ENCODE measurements at regions of chr17 and their contacts with region 1.

Region 1: DNA sequence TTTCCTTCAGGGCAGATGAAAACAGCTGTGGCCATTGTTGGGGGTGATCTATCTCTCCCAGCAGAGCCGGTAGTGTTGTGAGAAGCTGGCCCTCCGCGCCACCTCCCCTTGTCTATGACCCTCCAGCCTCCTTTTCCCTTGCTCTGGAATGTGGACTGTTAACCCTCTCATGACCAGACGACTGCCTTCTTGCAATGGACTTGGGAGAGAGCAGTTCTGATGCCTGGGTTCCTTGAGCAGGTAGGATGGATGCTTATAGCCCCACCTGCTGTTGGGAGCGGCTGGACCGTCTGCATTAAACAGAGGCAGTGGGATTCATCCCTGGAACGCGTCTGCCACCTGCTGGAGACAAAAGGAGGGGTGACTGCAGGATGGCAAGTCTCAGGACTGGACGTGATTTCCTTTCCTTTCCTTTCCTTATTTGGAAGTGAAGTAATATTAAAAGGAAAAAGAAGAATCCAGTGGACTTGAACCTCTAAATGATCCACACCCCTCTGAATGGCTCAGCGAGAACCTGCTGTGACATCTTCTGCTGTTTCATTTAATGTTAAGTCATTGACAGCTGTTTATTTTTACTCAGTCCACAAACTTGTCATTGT is 1.8 kb upstream of the SOST start:
- DNase-seq: peak; percentile 96
- H3K4me3 ChIP-seq: no peak overlapping the region
- H3K27ac ChIP-seq: peak overlapping the region in 1 of 4 donors; percentile 44
- H3K4me1 ChIP-seq: peaks cover 0 to 10% (median 9%) of the 10 kb centered on the region in 4 donors
- H3K27me3 ChIP-seq: peaks cover 4 to 26% (median 19%) of the 10 kb centered on the region in 3 donors
- CTCF ChIP-seq: peak; percentile 96 to 99 (median 99)
- EP300 ChIP-seq: no peak
- POLR2A ChIP-seq: no peak

Region 2: DNA sequence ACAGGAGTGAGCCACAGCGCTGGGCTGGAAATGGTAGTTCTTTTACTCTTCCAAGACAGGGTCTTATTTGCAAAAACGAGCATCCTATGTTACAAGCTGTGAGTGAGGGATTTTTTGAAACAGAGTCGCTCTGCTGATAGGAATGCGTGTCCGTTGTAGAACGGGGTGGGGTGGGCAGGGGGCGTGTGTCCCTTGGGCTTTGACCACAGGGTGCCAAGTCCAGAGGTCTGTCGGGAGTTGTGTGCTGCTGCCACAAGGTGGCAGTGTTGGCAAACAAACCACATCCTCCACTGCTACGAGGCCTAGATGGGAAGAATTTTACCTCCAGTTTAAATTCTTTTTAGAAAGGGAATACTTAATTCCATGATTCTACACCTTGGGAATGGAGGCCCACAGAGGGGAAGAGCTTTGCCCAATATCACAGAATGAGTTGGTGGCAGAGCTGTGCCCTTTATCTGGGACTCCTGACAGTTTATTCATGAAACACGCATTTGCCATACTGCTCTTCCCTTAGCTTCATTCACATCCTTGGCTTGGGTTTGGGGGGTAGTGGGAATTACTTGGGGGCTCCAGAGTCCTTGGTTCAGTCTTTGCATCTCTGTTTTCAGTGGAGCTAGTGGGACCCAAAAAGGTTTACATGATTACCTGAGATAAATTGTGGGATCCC is 183.7 kb before region 1 on chr17:
- intact Hi-C with region 1: loop called (anchors 5 kb)
- DNase-seq: peak; percentile 77
- H3K4me3 ChIP-seq: no peak overlapping the region
- H3K27ac ChIP-seq: no peak overlapping the region
- H3K4me1 ChIP-seq: peaks cover 0 to 18% (median 15%) of the 10 kb centered on the region in 4 donors
- H3K27me3 ChIP-seq: no peaks in the 10 kb centered on the region
- CTCF ChIP-seq: peak; percentile 88 to 96 (median 92)
- EP300 ChIP-seq: no peak
- POLR2A ChIP-seq: no peak

Region 3: GRCh38 chr17:43694077-43694870 is 66.1 kb before region 1 on chr17:
- intact Hi-C with region 1: loop called (anchors 1 kb)
- DNase-seq: peak; percentile 88
- H3K4me3 ChIP-seq: no peak overlapping the region
- H3K27ac ChIP-seq: no peak overlapping the region
- H3K4me1 ChIP-seq: peaks cover 0 to 14% (median 11%) of the 10 kb centered on the region in 4 donors
- H3K27me3 ChIP-seq: no peaks in the 10 kb centered on the region
- CTCF ChIP-seq: peak; percentile 86 to 94 (median 92)
- EP300 ChIP-seq: no peak
- POLR2A ChIP-seq: no peak

Region 4: GRCh38 chr17:43846221-43846712 is 85.9 kb after region 1 on chr17:
- intact Hi-C with region 1: loop called (anchors 5 kb)
- DNase-seq: peak; percentile 94
- H3K4me3 ChIP-seq: no peak overlapping the region
- H3K27ac ChIP-seq: peak overlapping the region in 3 of 4 donors; percentile 5 to 40 (median 32)
- H3K4me1 ChIP-seq: peaks cover 0 to 16% (median 9%) of the 10 kb centered on the region in 4 donors
- H3K27me3 ChIP-seq: no peaks in the 10 kb centered on the region
- CTCF ChIP-seq: peak; percentile 95 to 98 (median 96)
- EP300 ChIP-seq: no peak
- POLR2A ChIP-seq: no peak

Measured in sigmoid colon (tissue), 7 donors.